Sigmoid colon (tissue), 7 donors: ENCODE measurements at regions of chr3 and their contacts with region 1.

Region 1: GRCh38 chr3:132641837-132642538 is 17.6 kb downstream of the ACAD11 start:
- DNase-seq: no peak
- H3K4me3 ChIP-seq: no peak overlapping the region
- H3K27ac ChIP-seq: no peak overlapping the region
- H3K4me1 ChIP-seq: no peaks in the 10 kb centered on the region
- H3K27me3 ChIP-seq: no peaks in the 10 kb centered on the region
- CTCF ChIP-seq: peak; percentile 57 to 71 (median 63)
- EP300 ChIP-seq: no peak
- POLR2A ChIP-seq: no peak

Region 2: GRCh38 chr3:132352541-132353143 is 289.3 kb before region 1 on chr3:
- intact Hi-C with region 1: loop called (anchors 10 kb)
- DNase-seq: peak; percentile 72
- H3K4me3 ChIP-seq: no peak overlapping the region
- H3K27ac ChIP-seq: no peak overlapping the region
- H3K4me1 ChIP-seq: no peaks in the 10 kb centered on the region
- H3K27me3 ChIP-seq: no peaks in the 10 kb centered on the region
- CTCF ChIP-seq: peak; percentile 59 to 89 (median 82)
- EP300 ChIP-seq: no peak
- POLR2A ChIP-seq: no peak

Region 3: DNA sequence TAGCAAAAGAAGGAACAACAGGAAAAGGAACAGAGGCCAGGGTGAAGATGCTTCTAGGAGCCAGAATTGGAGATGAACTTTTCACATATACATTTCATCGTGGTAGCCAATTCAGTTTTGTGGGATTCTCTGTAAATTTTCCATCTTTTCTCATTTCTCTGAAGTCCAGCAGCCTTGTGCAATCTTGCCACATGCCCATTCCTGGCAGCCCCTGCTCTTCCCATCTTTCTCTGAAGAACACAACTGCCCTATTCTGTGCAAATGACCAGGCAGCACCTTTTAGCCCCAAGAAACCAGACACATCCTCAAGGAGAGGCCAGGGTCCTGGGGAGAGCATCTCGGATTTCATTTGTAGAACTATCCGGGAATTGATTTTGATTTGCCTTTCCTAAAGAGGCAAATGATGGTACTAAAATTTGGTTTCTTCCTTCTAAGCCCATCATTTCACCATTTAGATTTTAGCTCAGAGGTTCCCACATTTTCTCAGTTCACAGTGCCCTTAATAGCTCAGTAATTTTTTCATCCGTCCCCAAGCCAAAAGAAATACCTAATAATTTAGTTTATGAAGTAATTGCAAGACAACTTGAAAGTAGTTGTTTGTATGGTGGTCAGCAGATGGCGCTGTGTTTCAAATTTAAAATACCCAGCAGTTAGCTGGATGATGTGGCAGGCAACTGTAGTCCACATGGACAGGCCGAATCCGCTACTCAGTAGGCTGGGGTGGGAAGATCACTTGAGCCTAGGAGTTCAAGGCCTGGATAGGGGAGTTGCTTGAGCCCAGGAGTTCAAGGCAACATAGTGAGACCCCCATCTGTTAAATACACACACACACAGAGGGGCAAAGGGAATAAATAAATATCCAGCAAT is 106.2 kb before region 1 on chr3:
- intact Hi-C with region 1: loop called (anchors 2 kb)
- DNase-seq: peak; percentile 84
- H3K4me3 ChIP-seq: no peak overlapping the region
- H3K27ac ChIP-seq: peak overlapping the region in 1 of 4 donors; percentile 12
- H3K4me1 ChIP-seq: peaks cover 0 to 5% (median 0%) of the 10 kb centered on the region in 4 donors
- H3K27me3 ChIP-seq: no peaks in the 10 kb centered on the region
- CTCF ChIP-seq: peak in 3 of 4 experiments; percentile 52 to 65 (median 64)
- EP300 ChIP-seq: no peak
- POLR2A ChIP-seq: no peak